Activated B cell treated with CpG ODN at 0.5 μM for 24 hours (primary cell): ENCODE measurements at regions of chr17 and their contacts with region 1.

Region 1: GRCh38 chr17:77399319-77399957 is 258.7 kb downstream of the SEC14L1 start:
- DNase-seq: no peak
- ATAC-seq: no peak
- H3K4me3 Mint-ChIP-seq: no peak overlapping the region
- H3K27ac Mint-ChIP-seq: peak overlapping the region; percentile 90
- H3K4me1 Mint-ChIP-seq: peaks cover 48% of the 10 kb centered on the region
- H3K27me3 Mint-ChIP-seq: no peaks in the 10 kb centered on the region
- CTCF ChIP-seq: no peak

Region 2: GRCh38 chr17:77388384-77389311 is 10.8 kb before region 1 on chr17:
- CTCF ChIA-PET with region 1: interaction called, 8 read pairs
- POLR2A ChIA-PET with region 1: interaction called, 30 read pairs
- intact Hi-C with region 1: no loop called
- DNase-seq: no peak
- ATAC-seq: no peak
- H3K4me3 Mint-ChIP-seq: peak overlapping the region; percentile 46
- H3K27ac Mint-ChIP-seq: peak overlapping the region; percentile 80
- H3K4me1 Mint-ChIP-seq: peaks cover 43% of the 10 kb centered on the region
- H3K27me3 Mint-ChIP-seq: no peaks in the 10 kb centered on the region
- CTCF ChIP-seq: no peak

Region 3: GRCh38 chr17:77619851-77620250 is 220.4 kb after region 1 on chr17:
- CTCF ChIA-PET with region 1: no interaction called
- POLR2A ChIA-PET with region 1: no interaction called
- intact Hi-C with region 1: no loop called
- DNase-seq: no peak
- ATAC-seq: no peak
- H3K4me3 Mint-ChIP-seq: no peak overlapping the region
- H3K27ac Mint-ChIP-seq: no peak overlapping the region
- H3K4me1 Mint-ChIP-seq: peaks cover 4% of the 10 kb centered on the region
- H3K27me3 Mint-ChIP-seq: peaks cover 6% of the 10 kb centered on the region
- CTCF ChIP-seq: no peak

Region 4: DNA sequence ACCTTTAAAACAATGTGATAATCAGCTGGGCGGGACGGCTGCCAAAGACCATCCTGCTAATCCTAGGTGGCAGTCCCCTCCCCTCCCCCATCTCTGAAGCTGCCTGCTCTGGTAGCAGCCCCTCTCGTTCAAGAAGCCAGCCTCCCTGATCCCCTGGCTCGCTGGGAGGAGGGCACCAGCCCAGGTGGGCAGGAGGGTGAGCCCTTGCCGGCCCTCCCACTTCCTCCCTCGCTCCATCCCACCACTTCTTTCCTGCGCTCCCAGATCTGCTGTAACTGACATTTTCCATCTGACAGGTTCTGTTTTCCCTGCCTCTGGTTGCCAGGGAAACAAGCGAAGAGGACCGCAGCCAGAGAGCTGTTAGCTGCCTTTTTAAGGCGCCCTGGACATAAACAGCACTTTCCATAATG is 403.4 kb after region 1 on chr17:
- CTCF ChIA-PET with region 1: no interaction called
- POLR2A ChIA-PET with region 1: no interaction called
- intact Hi-C with region 1: no loop called
- DNase-seq: no peak
- ATAC-seq: no peak
- H3K4me3 Mint-ChIP-seq: no peak overlapping the region
- H3K27ac Mint-ChIP-seq: no peak overlapping the region
- H3K4me1 Mint-ChIP-seq: no peaks in the 10 kb centered on the region
- H3K27me3 Mint-ChIP-seq: peaks cover 47% of the 10 kb centered on the region
- CTCF ChIP-seq: no peak